ENCODE measurements at regions of chr22 and their contacts with region 1.

Region 1: DNA sequence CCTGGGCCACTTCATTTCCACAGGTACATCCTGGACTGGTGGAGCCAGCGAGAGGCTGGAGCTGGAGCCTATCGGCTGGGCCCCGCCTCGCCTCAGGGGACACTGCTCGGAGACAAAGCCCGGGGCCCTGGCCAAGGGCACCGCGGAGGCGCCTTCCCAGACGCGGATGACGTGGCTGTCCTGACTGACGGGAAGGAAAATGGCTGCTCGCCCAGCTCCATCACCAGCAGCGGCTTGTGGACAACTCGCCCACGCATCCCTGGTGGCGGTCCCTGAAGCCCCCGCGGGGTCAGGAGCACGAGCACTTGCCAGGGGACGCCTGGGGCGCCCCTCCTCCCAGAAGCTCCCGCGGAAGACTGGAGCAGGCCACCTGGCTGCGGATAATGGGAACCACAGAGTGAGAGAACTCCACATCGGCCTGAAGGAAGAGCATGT is 49.6 kb downstream of the CECR2 start:
- DNase-seq: peak; percentile 50
- ATAC-seq: peak; percentile 74
- H3K4me3 Mint-ChIP-seq: no peak overlapping the region
- H3K27ac Mint-ChIP-seq: peak overlapping the region; percentile 83
- H3K4me1 Mint-ChIP-seq: peaks cover 78% of the 10 kb centered on the region
- H3K27me3 Mint-ChIP-seq: no peaks in the 10 kb centered on the region
- CTCF ChIP-seq: no peak

Region 2: GRCh38 chr22:17436382-17436980 is 17.6 kb after region 1 on chr22:
- CTCF ChIA-PET with region 1: interaction called, 11 read pairs
- POLR2A ChIA-PET with region 1: interaction called, 3 read pairs
- DNase-seq: no peak
- ATAC-seq: peak; percentile 20; the same call in 1 of the 2 replicates
- H3K4me3 Mint-ChIP-seq: peak overlapping the region; percentile 54
- H3K27ac Mint-ChIP-seq: peak overlapping the region; percentile 91
- H3K4me1 Mint-ChIP-seq: peaks cover 84% of the 10 kb centered on the region
- H3K27me3 Mint-ChIP-seq: no peaks in the 10 kb centered on the region
- CTCF ChIP-seq: no peak

Region 3: DNA sequence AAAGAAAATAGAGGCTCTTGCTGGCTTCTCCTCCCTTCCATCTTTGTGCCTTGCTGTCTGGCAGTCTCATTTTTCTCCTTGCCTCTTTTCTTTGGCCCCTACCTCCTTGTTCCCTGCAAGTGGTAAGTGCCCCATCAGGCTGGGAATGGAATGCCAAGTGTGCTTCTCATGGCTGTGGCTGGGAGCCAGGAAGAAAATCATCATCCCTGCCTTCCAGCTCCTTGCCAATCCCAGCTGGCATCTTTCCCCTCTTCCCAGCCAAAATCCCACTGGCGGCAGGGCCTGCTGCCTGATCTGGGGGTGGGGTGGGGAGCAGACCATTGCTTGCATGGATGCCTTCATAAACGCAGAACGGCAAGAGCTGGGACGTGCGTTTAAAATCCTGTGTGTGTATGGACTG is 117.4 kb after region 1 on chr22:
- CTCF ChIA-PET with region 1: no interaction called
- POLR2A ChIA-PET with region 1: no interaction called
- DNase-seq: no peak
- ATAC-seq: no peak
- H3K4me3 Mint-ChIP-seq: no peak overlapping the region
- H3K27ac Mint-ChIP-seq: peak overlapping the region; percentile 81
- H3K4me1 Mint-ChIP-seq: peaks cover 13% of the 10 kb centered on the region
- H3K27me3 Mint-ChIP-seq: no peaks in the 10 kb centered on the region
- CTCF ChIP-seq: no peak